Left cardiac atrium (tissue), 4 donors: ENCODE measurements at regions of chr13 and their contacts with region 1.

Region 1: DNA sequence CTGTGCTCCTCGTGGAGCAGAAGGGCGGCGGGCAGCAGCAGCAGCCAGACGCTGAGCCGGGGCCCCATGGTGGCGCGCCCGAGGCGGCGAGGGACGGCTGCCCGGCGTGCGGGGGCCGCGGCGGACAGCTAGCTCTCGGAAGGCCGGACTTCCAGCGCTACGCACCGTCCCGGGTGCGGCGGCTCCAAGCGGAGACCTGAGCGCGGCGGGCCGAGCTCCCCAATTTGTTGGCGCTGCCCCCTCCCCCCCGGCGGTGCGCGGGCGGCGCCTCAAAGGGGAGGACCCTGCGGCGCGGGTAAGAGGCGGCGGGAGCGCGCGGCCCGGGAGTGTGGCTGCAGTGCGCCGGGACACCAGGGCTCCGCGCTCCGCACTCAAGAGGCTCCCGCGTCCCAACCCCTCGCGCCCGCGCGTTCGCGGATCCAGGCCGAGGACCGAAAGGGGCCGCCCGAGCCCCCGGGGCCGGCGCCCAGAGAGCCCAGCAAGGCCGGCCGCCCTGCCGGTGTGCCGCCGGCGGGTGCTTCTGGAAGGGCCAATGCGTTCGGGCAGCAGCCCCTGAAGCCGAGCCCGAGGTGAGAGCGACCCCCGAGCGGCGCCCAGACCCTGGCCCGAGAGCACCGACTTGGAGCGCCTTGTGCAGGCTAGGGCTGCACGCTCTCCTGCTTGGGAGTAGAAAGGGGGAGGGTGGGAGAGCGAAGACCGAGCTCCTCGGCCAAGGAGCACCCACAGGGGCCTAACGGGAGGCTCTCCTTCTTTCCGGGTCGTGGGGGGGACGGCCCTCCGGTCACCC is at the starts of genes COL4A1 and COL4A2:
- DNase-seq: peak; percentile 84
- ATAC-seq: peak; percentile 85 to 88
- total RNA-seq, gene COL4A1: 210 to 456 TPM
- total RNA-seq, gene COL4A2: 176 to 384 TPM

Region 2: GRCh38 chr13:110225609-110226562 is 81.3 kb before region 1 on chr13:
- intact Hi-C with region 1: loop called in 1 of 2 experiments (anchors 5 kb)
- DNase-seq: no peak
- ATAC-seq: no peak

Region 3: DNA sequence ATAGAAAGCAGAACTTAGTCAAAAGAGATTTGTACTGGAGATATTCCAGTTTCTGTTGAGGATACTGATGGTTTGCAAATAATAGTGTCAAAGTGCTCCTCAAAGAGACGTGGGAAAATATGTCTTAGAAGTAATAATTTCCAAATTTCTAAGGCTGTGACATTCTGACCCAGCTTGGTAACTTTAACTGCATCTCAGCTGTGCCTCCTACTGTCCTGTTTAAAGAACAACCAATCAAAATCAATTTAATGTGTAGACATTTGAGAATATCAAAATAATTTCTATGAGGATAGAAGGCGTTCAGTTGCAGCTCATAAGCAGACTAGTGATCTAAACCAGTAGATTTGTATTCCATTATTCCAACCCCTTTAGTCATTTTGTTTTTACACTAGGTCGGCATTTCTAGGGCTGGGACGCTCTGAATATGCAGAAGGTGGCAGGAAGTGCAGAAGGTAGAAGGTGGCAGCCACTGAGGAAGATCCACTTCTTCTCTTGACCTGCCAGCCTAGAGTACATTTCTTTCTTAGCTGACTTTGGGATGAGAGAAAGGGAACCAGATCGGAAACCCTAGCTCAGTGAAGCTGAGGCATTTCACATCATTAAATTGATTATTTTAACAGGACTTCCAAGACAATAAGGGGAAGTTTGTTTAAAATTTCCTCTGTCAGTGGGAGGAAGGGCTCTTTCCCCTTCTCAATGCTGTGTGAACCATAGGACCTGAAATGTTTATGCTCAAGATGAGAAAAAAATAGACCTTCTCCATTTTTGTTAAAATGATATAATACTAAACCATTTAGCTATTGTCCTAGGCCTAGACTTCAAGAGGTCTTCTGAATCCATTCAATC is 67.7 kb before region 1 on chr13:
- intact Hi-C with region 1: loop called in 1 of 2 experiments (anchors 5 kb)
- DNase-seq: no peak
- ATAC-seq: no peak

Region 4: DNA sequence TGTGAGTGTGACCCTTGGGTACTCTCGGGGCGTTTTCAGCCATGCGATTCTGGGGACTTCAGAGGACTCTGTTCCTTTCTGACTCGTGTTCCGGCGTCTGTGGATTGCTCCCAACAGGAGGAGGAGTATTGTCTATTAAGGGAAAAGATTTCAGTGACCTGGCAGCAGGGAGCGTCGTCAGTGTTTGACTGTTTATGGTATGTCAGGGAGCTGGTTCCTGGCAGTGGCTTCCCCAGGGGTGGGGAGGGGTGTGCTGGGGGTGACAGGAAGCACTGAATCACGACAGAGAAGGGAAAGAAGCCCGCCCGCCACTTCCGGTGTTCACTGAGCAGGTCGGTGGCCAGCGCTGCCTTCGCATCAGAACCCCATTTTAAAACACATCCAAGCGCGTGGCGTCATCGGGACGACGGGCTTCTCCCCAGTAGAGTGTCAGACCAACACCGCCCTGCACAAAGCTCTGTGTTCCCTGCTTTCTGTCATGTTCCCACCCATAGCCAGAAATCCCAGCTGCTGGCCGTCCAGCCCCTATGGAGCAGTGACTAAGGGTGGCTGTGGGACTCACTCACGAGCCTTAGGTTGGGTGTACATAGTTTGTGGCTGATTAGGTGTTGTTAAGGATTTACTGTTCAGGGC is 33.8 kb after region 1 on chr13:
- intact Hi-C with region 1: loop called in 1 of 2 experiments (anchors 5 kb)
- DNase-seq: peak; percentile 95
- ATAC-seq: peak; percentile 67 to 79

Region 5: DNA sequence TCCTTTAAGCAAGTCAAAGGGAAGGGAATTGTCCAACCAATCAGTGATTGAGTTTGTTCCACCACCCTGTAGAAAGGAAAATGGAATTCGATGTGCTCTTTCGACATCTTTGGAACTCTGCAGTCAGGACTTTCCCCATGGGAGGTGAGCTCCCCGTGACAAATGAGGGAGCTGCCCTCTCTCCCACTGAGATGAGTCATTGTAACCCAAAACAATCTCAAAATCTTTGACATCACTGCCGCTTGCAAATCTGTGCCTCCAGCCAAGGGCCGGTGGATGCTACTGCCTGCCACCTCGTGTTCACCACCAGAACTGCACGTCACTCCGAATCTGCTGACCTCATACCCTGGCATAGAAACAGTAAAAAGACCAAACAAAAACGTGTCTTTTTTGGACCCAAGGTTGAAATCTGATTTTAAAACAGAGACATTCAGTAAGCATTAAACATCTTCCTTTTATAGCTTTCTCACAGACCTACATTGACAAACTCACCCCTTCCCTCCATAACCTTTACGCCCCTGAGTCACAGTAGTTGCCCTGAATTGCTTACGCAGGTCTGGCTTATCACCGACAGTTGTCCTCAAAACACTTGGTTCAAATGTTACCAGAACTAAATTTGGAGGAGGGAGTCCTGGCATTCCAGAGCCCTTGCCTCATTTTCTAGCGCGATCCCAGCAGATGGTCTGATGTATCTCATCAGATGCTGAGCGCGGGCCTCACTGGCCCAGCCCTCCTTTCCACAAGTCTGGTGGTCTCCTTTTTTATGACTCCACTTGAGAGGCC is 105.2 kb after region 1 on chr13:
- intact Hi-C with region 1: loop called (anchors 5 kb)
- DNase-seq: peak; percentile 89
- ATAC-seq: peak; percentile 79 to 81